ENCODE measurements at regions of chr10 and their contacts with region 1.

Region 1: GRCh38 chr10:22988581-22989360 is 60.9 kb downstream of the ARMC3 start:
- DNase-seq: peak; percentile 47
- H3K4me3 Mint-ChIP-seq: no peak overlapping the region
- H3K27ac Mint-ChIP-seq: no peak overlapping the region
- H3K4me1 Mint-ChIP-seq: peaks cover 14% of the 10 kb centered on the region
- H3K27me3 Mint-ChIP-seq: peaks cover 16% of the 10 kb centered on the region

Region 2: GRCh38 chr10:21993360-21994001 is 995.3 kb before region 1 on chr10:
- intact Hi-C with region 1: loop called (anchors 2 kb)
- DNase-seq: no peak
- H3K4me3 Mint-ChIP-seq: no peak overlapping the region
- H3K27ac Mint-ChIP-seq: no peak overlapping the region
- H3K4me1 Mint-ChIP-seq: peaks cover 11% of the 10 kb centered on the region
- H3K27me3 Mint-ChIP-seq: no peaks in the 10 kb centered on the region

Region 3: DNA sequence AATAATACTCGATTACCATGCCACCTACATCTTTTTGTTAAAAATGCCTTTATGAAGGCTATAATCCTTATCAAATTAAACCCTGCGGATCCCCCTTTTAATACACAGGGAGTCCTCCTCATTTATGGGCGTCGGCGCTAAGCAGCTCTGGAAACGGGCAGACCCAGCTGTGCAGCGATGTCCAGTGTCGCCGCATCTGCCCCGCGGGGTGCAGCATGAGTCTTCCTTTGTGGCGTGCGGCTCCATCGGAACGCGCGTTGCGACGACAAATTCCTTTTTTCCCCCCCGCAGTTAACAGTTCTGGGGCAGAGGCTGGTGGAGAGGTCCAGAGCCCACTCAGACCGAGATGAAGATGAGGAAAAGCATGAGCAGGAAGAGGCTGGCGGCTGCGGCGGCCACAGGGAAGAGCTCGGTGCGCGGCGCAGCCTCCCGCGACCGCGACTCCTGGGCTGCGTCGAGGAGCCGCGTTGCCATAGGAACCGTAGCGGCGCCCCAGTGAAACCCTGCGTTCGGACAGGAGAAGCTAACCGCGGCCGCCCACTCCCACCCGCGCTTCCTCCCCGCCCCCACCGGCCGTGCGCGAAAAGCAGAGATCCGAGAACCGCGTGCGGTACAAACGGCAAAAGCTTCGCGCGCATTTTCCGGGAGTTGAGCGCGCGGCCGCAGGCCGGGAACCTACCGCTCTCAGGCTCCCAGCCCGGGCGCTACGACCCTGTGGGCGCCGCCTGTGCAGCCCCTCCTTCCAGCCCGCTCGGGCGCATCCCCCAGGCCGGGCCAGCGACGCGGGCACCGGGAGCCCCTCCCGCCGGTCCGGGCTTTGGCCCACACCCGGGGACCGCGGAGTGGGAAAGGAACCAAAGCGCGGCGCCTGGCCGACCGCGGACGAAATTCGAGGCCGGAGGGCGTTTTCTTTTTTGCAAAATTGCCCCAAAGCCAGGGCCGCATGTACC is 512.8 kb before region 1 on chr10:
- intact Hi-C with region 1: loop called (anchors 10 kb)
- DNase-seq: no peak
- H3K4me3 Mint-ChIP-seq: peak overlapping the region; percentile 83
- H3K27ac Mint-ChIP-seq: peak overlapping the region; percentile 28
- H3K4me1 Mint-ChIP-seq: peaks cover 6% of the 10 kb centered on the region
- H3K27me3 Mint-ChIP-seq: peaks cover 57% of the 10 kb centered on the region

Region 4: GRCh38 chr10:22550732-22551131 is 438.0 kb before region 1 on chr10:
- intact Hi-C with region 1: loop called (anchors 2 kb)
- DNase-seq: peak; percentile 21
- H3K4me3 Mint-ChIP-seq: no peak overlapping the region
- H3K27ac Mint-ChIP-seq: peak overlapping the region; percentile 37
- H3K4me1 Mint-ChIP-seq: peaks cover 15% of the 10 kb centered on the region
- H3K27me3 Mint-ChIP-seq: no peaks in the 10 kb centered on the region

Region 5: GRCh38 chr10:23035569-23035968 is 46.8 kb after region 1 on chr10:
- intact Hi-C with region 1: no loop called
- DNase-seq: no peak
- H3K4me3 Mint-ChIP-seq: no peak overlapping the region
- H3K27ac Mint-ChIP-seq: no peak overlapping the region
- H3K4me1 Mint-ChIP-seq: no peaks in the 10 kb centered on the region
- H3K27me3 Mint-ChIP-seq: peaks cover 8% of the 10 kb centered on the region